Ovary (tissue), 10 donors: ENCODE measurements at regions of chr1 and their contacts with region 1.

Region 1: DNA sequence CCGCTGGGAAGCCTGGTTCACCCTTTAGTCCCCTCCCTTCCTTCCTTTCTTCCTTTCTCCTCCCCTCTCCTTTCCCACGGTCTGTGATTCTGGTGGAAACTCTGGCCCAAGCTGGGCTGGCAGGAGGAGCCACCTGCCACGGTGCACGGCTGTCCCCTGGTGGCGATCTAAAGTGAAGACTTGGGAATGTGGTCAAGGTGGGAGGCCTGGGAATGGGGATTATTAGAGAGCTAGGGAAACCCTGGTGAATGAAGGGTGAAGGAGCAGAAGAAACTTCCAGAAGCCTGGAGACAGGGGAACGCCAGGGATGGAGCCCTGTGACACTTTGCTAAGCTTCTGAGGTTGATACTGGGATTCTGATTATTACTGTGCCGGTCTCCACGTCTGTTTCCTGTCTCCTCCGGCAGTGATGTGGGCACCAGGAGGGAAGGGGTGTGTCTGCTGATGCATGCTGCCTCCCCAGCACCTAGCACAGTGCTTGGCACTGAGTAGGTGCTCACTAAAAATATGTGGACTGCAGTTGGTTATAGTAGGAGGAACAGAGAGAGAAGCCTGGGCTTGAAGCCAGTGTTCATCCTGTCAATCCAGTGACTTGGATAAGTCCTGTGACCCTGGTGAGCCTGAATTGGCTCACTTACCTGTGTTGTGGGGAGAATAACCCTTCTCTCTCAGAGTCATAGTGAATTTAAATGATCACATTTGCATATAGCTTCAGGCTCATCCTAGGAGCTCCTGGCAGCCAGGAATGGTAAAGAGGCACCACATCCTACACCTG is 71.2 kb upstream of the NBPF3 start:
- DNase-seq: peak; percentile 77 to 87 (median 86)
- H3K4me3 ChIP-seq: no peak overlapping the region
- H3K27ac ChIP-seq: no peak overlapping the region
- H3K4me1 ChIP-seq: no peaks in the 10 kb centered on the region
- H3K27me3 ChIP-seq: no peaks in the 10 kb centered on the region
- CTCF ChIP-seq: peak; percentile 98 to 100 (median 99)
- EP300 ChIP-seq: no peak
- POLR2A ChIP-seq: peak; percentile 32

Region 2: DNA sequence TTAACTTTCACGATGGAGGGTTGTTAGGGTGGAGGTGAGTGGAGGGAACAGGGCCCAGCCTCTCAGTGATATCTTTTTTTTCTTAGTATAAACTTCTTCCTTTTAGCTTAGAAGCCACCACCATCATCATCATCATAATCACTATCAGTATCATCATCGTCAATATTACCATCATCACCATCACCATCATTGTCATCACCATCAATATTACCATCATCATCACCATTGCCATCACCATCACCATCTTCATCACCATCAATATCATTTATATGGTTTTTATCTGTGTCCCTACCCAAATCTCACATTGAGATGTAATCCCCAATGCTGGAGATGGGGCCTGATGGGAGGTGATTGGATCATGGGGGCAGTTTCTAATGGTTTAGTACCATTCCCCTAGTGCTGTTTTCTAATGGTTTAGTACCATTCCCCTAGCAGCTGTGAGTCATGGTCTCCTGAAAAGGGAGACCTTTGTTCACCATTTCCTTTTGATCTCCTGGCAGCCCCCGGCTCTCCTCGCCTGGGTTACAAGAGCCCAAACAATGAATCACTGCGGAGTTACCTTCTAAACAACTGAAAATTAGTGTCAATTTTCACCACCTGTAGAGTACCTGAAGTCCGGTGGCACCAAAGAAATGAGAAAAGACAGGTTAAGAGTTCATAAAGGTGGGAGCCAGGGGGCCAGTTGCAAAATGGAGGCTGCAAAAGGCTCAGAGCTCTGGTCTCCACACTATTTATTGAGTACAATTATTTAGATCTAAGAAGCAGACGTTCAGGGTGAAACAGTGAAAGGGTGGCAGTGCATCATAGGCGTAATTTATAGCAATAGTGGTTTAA is 1442.2 kb before region 1 on chr1:
- intact Hi-C with region 1: loop called in 1 of 4 experiments (anchors 5 kb)
- DNase-seq: no peak
- H3K4me3 ChIP-seq: no peak overlapping the region
- H3K27ac ChIP-seq: no peak overlapping the region
- H3K4me1 ChIP-seq: peaks cover 2% of the 10 kb centered on the region
- H3K27me3 ChIP-seq: no peaks in the 10 kb centered on the region
- CTCF ChIP-seq: no peak
- EP300 ChIP-seq: no peak
- POLR2A ChIP-seq: no peak

Region 3: GRCh38 chr1:21232044-21232443 is 136.7 kb before region 1 on chr1:
- intact Hi-C with region 1: loop called (anchors 2 to 5 kb)
- DNase-seq: peak in 2 of 5 donors; percentile 40 to 63
- H3K4me3 ChIP-seq: no peak overlapping the region
- H3K27ac ChIP-seq: no peak overlapping the region
- H3K4me1 ChIP-seq: no peaks in the 10 kb centered on the region
- H3K27me3 ChIP-seq: no peaks in the 10 kb centered on the region
- CTCF ChIP-seq: peak; percentile 48 to 86 (median 73)
- EP300 ChIP-seq: no peak
- POLR2A ChIP-seq: no peak

Region 4: DNA sequence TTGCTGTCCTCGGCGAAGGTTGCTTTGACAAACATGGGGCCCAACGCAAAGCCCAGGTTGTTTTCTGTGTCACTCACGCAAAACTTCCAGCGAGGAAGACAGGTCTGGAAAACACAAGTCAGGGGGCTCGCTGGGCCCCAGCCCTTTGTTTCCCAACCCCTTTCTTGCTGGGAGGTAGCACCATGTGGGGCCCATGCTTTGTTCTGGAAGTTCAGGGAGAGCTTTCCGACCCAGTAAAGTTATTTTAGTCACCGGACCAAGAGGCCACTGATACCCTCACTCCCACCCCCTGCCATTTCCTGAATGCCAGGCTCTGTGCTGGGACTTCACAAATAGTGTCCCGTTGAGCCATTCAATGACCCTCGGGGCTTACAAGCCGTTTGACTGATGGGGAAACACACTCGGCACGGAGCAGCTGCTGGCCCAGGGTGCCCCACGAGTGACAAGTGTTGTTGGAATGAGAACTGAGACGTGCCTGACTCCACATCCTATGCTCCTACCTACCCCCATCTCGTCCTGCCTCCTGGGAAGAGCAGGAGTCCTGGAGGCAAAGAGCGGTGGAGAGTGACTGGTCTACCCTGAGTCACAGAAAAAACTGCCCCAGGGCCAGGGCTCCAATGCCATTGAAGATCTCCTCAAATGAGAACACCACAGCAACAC is 130.4 kb before region 1 on chr1:
- intact Hi-C with region 1: loop called (anchors 2 to 5 kb)
- DNase-seq: no peak
- H3K4me3 ChIP-seq: no peak overlapping the region
- H3K27ac ChIP-seq: no peak overlapping the region
- H3K4me1 ChIP-seq: no peaks in the 10 kb centered on the region
- H3K27me3 ChIP-seq: no peaks in the 10 kb centered on the region
- CTCF ChIP-seq: no peak
- EP300 ChIP-seq: no peak
- POLR2A ChIP-seq: no peak

Region 5: GRCh38 chr1:21255278-21255942 is 113.3 kb before region 1 on chr1:
- intact Hi-C with region 1: loop called (anchors 2 to 5 kb)
- DNase-seq: peak; percentile 87 to 94 (median 93)
- H3K4me3 ChIP-seq: no peak overlapping the region
- H3K27ac ChIP-seq: peak overlapping the region; percentile 30 to 51
- H3K4me1 ChIP-seq: peaks cover 7% of the 10 kb centered on the region
- H3K27me3 ChIP-seq: no peaks in the 10 kb centered on the region
- CTCF ChIP-seq: peak; percentile 70 to 94 (median 86)
- EP300 ChIP-seq: no peak
- POLR2A ChIP-seq: no peak

Region 6: DNA sequence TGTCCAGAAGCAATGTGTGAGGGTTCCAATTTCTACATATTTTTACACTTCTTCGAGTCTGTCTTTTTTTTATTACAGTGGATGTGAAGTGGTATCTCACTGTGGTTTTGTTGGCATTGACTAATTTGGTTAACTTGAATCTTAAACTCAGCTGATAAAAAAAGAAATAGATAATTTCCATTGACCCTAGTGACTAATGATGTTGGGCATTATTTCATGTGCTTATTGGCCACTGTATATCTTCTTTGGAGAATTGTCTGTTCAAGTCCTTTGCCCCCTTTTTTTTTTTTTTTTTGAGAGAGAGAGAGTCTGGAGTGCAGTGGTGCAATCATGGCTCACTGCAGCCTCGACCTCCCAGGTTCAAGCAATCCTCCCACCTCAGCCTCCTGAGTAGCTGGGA is 38.0 kb after region 1 on chr1:
- intact Hi-C with region 1: no loop called
- DNase-seq: no peak
- H3K4me3 ChIP-seq: no peak overlapping the region
- H3K27ac ChIP-seq: no peak overlapping the region
- H3K4me1 ChIP-seq: no peaks in the 10 kb centered on the region
- H3K27me3 ChIP-seq: no peaks in the 10 kb centered on the region
- CTCF ChIP-seq: no peak
- EP300 ChIP-seq: no peak
- POLR2A ChIP-seq: no peak

Region 7: DNA sequence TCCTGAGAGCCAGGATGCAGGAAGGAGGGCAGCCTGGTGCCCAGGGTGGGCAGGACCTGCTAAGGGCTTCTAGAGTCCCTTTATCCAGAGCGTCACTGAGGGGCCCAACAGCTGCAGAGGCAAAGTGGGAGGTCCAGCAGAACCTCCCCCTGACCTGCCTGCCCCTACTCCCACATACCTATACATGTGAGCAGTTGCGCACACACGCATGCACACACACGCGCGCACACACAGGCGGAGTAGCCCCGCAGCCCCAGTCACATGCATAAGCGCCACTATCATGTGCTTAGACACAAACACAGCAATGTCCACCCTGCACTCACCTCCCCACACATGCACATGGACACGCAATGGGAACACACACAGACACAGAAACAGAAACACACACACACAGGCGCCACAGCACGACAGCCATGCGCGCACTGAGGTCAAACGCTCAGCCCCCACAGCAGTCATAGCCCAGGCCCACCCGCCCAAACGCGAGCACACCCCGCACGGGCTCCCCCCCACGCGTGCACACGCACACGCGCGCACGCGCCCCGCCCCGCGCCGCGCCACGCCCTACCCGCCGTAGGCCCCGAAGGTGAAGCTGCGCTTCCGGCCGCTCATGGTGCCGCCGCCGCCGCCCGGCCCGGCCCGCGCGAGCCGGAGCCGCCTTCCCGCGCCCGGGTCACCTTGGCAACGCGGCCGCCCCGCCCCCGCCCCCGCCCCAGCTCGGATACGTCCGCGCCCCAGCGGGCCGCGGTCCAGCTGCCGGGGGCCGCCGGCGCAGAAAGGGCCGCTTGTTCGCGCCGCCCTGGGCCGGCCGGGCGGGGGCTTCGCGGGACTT is 282.7 kb after region 1 on chr1:
- intact Hi-C with region 1: loop called in 1 of 4 experiments (anchors 5 kb)
- DNase-seq: peak in 4 of 5 donors; percentile 33 to 68 (median 62)
- H3K4me3 ChIP-seq: peak overlapping the region; percentile 39
- H3K27ac ChIP-seq: no peak overlapping the region
- H3K4me1 ChIP-seq: peaks cover 5% of the 10 kb centered on the region
- H3K27me3 ChIP-seq: no peaks in the 10 kb centered on the region
- CTCF ChIP-seq: no peak
- EP300 ChIP-seq: no peak
- POLR2A ChIP-seq: no peak